Panc1 (cell line): ENCODE measurements at regions of chr12 and their contacts with region 1.

Region 1: GRCh38 chr12:31629756-31630732 is 29.4 kb upstream of the ETFBKMT start:
- DNase-seq: no peak
- ATAC-seq: no peak
- H3K4me3 ChIP-seq: no peak overlapping the region
- H3K27ac ChIP-seq: no peak overlapping the region
- H3K4me1 ChIP-seq: no peaks in the 10 kb centered on the region
- H3K27me3 ChIP-seq: no peaks in the 10 kb centered on the region
- CTCF ChIP-seq: no peak

Region 2: DNA sequence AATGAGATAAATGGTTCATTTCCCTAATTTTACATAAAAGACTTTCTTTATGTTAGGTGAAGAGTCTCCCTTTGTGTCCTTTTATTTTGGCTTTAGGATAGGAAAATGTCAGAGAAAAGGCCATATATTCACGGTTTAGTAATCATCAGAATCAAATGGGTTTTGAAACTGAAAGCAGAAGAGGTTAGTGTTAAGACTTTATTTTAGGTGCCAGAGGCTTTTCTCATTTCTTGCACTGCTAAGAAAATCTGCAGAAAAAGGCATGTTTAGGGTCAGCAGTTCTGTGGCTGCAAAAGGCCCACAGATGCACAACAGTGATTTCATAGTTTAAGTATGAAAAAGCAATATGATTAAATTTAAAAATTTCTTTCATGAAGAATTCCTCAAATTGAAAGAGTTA is 223.7 kb before region 1 on chr12:
- CTCF ChIA-PET with region 1: interaction called, 12 read pairs
- POLR2A ChIA-PET with region 1: no interaction called
- in situ Hi-C with region 1: no loop called
- intact Hi-C with region 1: no loop called
- DNase-seq: no peak
- ATAC-seq: no peak
- H3K4me3 ChIP-seq: no peak overlapping the region
- H3K27ac ChIP-seq: no peak overlapping the region
- H3K4me1 ChIP-seq: 0 out of 2 replicates have a peak, but pooled peaks cover 3% of the 10 kb centered on the region
- H3K27me3 ChIP-seq: no peaks in the 10 kb centered on the region
- CTCF ChIP-seq: no peak

Region 3: DNA sequence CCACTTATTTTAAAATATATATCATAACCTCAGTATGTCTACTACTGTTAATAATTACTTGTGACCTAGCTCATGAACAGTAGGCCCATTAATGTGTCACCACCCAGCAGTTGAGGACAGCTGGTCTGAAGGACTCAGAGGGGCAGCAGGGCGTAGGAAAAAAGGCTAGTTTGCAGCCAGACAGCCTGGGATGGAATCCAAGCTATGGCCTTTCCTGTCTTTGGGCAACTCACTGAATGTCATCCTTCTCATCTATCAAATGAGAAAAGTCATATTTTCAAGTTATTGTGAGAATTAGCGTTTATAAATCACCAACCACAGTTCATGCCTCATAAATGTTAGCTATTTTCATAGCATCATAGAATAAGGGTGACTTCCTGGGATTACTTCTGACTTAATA is 51.4 kb before region 1 on chr12:
- CTCF ChIA-PET with region 1: interaction called, 10 read pairs
- POLR2A ChIA-PET with region 1: no interaction called
- in situ Hi-C with region 1: no loop called
- intact Hi-C with region 1: no loop called
- DNase-seq: no peak
- ATAC-seq: no peak
- H3K4me3 ChIP-seq: no peak overlapping the region
- H3K27ac ChIP-seq: no peak overlapping the region
- H3K4me1 ChIP-seq: no peaks in the 10 kb centered on the region; the same call in 1 of the 2 replicates
- H3K27me3 ChIP-seq: no peaks in the 10 kb centered on the region
- CTCF ChIP-seq: no peak